Heart left ventricle (tissue), 16 donors: ENCODE measurements at regions of chr10 and their contacts with region 1.

Region 1: GRCh38 chr10:110016039-110016438 is 8.3 kb downstream of the ADD3 start:
- DNase-seq: no peak
- ATAC-seq: peak; percentile 43 to 63 (median 54)
- H3K4me3 ChIP-seq: no peak overlapping the region
- H3K27ac ChIP-seq: peak overlapping the region in 10 of 12 donors; percentile 2 to 63 (median 42)
- H3K4me1 ChIP-seq: peaks cover 0 to 88% (median 64%) of the 10 kb centered on the region in 12 donors
- H3K27me3 ChIP-seq: no peaks in the 10 kb centered on the region
- CTCF ChIP-seq: peak in 7 of 12 donors; percentile 7 to 45 (median 25)
- POLR2A ChIP-seq: no peak

Region 2: DNA sequence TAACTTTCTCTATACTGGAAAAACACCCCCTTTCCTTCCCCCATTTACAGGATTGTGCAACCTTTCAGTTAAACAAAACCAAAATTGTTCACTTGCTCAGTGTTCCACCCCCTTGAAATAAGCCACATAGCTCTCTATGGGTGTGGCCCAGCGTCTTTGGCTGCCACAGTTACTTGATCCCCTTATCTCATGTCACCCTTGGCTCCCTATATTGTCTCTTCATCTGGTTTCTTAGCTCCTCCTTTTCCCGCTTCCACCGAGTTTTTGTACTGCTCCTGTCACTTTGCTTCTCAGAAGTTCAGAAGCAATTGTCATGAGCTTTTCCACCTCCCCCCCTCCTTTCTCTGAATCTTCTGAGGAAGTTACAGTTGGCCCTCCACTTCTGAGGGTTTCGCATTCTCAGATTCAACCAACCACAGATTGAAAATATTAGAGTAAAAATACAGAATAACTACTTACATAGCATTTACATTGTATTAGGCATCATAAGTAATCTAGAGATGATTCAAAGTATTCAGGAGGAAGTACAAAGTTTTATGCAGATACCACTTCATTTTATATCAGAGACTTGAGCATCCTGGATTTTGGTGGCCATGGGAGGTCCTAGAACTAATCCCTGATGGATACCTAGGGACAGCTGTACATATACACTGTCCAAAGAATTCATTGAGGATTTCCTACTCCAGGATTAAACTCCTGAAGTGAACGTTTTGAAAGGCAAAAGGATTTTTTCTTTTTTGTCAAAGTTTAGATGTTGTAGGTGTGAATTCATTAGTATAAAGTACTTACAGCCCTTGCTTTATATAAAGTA is 52.1 kb after region 1 on chr10:
- intact Hi-C with region 1: loop called in 2 of 10 experiments (anchors 10 kb)
- DNase-seq: peak in 3 of 5 donors; percentile 17 to 57 (median 55)
- ATAC-seq: peak; percentile 52 to 90 (median 79)
- H3K4me3 ChIP-seq: no peak overlapping the region
- H3K27ac ChIP-seq: peak overlapping the region in 11 of 12 donors; percentile 1 to 92 (median 60)
- H3K4me1 ChIP-seq: peaks cover 4 to 88% (median 72%) of the 10 kb centered on the region in 12 donors
- H3K27me3 ChIP-seq: no peaks in the 10 kb centered on the region
- CTCF ChIP-seq: no peak
- POLR2A ChIP-seq: no peak

Region 3: DNA sequence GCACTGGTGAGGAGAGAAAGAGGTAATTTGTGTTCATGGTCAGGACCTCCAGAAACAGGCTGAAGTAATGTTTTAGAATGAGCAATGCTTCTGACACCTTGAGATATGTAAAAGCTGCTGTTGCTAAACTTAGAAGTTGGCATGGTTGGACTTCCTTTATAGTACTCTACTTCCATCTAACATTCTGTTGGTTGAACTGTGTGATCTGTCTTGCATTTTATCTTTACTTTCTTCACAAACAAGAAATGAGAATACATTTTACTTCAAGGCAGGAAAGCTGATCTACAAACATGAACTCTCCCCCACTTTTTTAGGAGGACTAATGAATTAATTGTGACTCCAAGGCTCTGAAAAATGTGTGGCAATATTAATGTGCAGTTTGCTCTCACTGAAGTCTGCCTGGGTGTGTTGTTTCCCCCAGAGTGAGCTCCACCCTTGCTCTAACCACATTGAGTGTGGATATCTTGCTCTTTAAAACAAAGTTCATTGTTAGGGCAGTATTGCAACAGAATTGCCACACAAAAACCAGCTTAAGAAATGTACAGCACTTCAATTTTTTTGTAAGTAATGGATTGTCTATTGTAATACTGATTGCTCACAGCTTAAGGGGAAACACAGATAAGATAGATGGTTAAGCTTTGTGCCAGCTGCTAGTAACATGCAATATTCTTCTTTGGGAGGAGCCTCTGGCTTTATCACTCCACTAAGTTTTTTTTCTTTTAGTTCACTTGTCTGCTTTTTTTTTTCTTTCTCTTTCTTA is 60.7 kb after region 1 on chr10:
- intact Hi-C with region 1: loop called in 2 of 10 experiments (anchors 5 to 10 kb)
- DNase-seq: peak in 4 of 5 donors; percentile 36 to 57 (median 46)
- ATAC-seq: peak; percentile 65 to 92 (median 80)
- H3K4me3 ChIP-seq: peak overlapping the region in 9 of 12 donors; percentile 22 to 45 (median 37)
- H3K27ac ChIP-seq: peak overlapping the region; percentile 23 to 90 (median 82)
- H3K4me1 ChIP-seq: peaks cover 30 to 96% (median 84%) of the 10 kb centered on the region in 12 donors
- H3K27me3 ChIP-seq: no peaks in the 10 kb centered on the region
- CTCF ChIP-seq: no peak
- POLR2A ChIP-seq: no peak